Lower leg skin (tissue), 4 donors: ENCODE measurements at regions of chr16 and their contacts with region 1.

Region 1: GRCh38 chr16:83842756-83843507 is 35.2 kb downstream of the HSBP1 start:
- DNase-seq: peak in 1 of 2 donors; percentile 53
- H3K4me3 ChIP-seq: no peak overlapping the region
- CTCF ChIP-seq: no peak
- POLR2A ChIP-seq: no peak

Region 2: DNA sequence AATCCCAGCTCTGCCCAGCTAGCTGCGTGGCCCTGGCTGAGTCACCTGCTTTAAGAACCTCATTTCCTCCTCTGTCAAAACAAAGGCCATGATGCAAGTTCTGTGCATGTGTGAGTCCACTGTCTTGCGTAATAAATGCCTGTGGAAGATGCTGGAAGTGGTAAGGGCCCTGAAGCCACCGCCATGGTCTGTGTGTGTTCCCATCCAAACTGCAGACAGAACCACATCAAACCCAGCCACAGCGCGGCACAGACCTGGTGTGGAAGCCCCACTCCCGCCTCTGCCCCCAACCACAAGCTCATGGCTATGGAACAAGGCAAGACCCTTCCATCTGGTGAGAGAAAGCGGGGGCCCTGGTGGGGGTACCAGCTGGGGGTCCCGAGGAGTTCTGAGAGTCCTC is 151.2 kb after region 1 on chr16:
- intact Hi-C with region 1: loop called (anchors 10 kb)
- DNase-seq: no peak
- H3K4me3 ChIP-seq: no peak overlapping the region
- CTCF ChIP-seq: no peak
- POLR2A ChIP-seq: no peak